Activated T-helper 1 cell treated with anti-CD3 and anti-CD28 coated beads, Interleukin-12 subunit alpha, Interleukin-12 subunit beta, Interleukin-2, Interleukin-4 antibody, amounts not matched to agents 30 ng/mL and 10 ng/mL and 1 ng/mL, durations not matched to agents 14 hours and 24 hours and 36 hours (primary cell): ENCODE measurements at regions of chr10 and their contacts with region 1.

Region 1: DNA sequence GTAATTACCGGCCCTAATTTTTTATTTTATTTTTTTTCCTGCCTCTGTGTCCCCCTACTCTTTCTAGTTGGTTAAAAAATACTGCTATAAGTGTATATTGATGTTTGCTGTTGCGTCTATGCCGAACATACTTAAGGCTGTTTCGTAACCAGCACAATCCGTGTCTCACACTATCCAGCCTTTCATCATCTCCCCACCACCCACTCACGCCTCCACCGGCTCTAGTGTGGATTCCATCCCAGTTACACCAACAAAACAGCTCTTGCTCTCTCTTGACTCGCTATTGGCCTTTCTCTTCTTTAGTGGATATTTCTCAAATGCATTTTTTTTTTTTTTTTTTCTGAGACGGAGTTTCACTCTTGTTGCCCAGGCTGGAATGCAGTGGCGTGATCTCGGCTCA is 70.1 kb upstream of the CAMK1D start:
- DNase-seq: no peak
- H3K4me3 Mint-ChIP-seq: no peak overlapping the region
- H3K27ac Mint-ChIP-seq: no peak overlapping the region
- H3K4me1 Mint-ChIP-seq: no peaks in the 10 kb centered on the region
- H3K27me3 Mint-ChIP-seq: no peaks in the 10 kb centered on the region

Region 2: DNA sequence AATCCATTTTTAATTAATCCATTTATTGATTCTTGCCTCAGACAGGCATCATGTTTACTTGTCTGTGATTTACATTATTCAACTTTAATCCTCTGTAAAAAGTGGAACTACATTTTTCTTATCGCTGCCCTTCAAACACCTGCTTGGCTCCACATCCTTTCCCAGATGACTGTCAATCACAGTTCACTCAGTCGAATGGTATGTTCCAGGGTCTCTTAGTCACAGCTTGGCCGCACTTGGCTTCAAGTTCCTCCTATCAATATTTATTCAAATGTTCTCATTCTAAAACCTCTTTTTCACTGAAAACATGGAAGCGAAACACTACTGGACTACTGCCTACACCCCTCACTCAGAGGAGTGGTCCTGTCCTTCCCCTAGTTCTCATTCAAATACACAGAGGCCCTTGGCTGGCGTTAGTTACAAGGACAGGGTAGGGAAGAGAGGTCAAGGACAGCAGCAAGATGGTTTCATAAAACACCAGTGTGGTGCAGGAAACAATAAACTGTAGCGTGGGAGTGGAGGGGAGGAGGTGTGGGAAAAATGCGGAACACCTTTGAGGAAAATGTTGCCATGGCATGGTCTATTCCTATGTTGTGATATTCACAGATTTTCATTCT is 811.0 kb before region 1 on chr10:
- intact Hi-C with region 1: no loop called
- DNase-seq: no peak
- H3K4me3 Mint-ChIP-seq: no peak overlapping the region
- H3K27ac Mint-ChIP-seq: no peak overlapping the region
- H3K4me1 Mint-ChIP-seq: no peaks in the 10 kb centered on the region
- H3K27me3 Mint-ChIP-seq: peaks cover 4% of the 10 kb centered on the region

Region 3: GRCh38 chr10:12235796-12236195 is 43.5 kb before region 1 on chr10:
- intact Hi-C with region 1: no loop called
- DNase-seq: no peak
- H3K4me3 Mint-ChIP-seq: no peak overlapping the region
- H3K27ac Mint-ChIP-seq: no peak overlapping the region
- H3K4me1 Mint-ChIP-seq: peaks cover 8% of the 10 kb centered on the region
- H3K27me3 Mint-ChIP-seq: no peaks in the 10 kb centered on the region

Region 4: GRCh38 chr10:12264204-12264940 is 14.9 kb before region 1 on chr10:
- intact Hi-C with region 1: no loop called
- DNase-seq: peak; percentile 63
- H3K4me3 Mint-ChIP-seq: peak overlapping the region; percentile 82
- H3K27ac Mint-ChIP-seq: peak overlapping the region; percentile 98
- H3K4me1 Mint-ChIP-seq: peaks cover 23% of the 10 kb centered on the region
- H3K27me3 Mint-ChIP-seq: peaks cover 1% of the 10 kb centered on the region

Region 5: DNA sequence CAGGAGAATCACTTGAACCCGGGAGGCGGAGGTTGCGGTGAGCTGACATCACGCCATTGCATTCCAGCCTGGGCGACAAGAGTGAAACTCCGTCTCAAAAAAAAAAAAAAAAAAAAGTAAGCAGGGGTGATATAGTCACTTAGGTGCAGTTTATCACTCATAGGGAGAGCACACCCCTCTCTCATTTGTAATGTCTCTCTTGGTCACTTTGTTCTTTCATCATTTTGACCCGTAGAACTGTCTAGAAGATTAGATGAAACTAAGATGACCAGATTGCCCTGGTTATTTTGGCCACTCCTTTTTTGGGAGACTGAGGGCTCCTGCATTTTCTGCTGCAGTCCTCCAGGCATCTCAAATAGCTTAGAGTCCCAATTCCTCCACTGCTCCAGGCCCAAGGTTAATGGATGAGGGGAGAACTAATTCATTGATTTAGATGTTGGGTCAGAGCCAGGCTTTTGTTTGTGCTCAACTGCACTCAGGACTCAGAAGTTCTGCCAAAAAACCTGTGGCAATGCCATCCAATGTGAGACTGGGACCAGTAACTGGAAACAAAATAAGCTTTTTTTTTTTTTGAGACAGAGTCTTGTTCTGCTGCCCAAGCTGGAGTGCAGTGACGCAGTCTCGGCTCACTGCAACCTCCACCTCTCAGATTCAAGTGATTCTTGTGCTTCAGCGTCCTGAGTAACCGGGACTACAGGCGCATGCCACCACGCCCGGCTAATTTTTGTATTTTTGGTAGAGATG is 20.1 kb after region 1 on chr10:
- intact Hi-C with region 1: loop called (anchors 1 kb)
- DNase-seq: no peak
- H3K4me3 Mint-ChIP-seq: no peak overlapping the region
- H3K27ac Mint-ChIP-seq: no peak overlapping the region
- H3K4me1 Mint-ChIP-seq: no peaks in the 10 kb centered on the region
- H3K27me3 Mint-ChIP-seq: no peaks in the 10 kb centered on the region